Activated naive CD4-positive, alpha-beta T cell treated with anti-CD3 and anti-CD28 coated beads for 36 hours (primary cell): ENCODE measurements at regions of chr21 and their contacts with region 1.

Region 1: GRCh38 chr21:34807146-34807880 is 138.5 kb downstream of the CLIC6 start:
- DNase-seq: peak; percentile 92
- H3K4me3 Mint-ChIP-seq: no peak overlapping the region
- H3K27ac Mint-ChIP-seq: peak overlapping the region; percentile 91
- H3K4me1 Mint-ChIP-seq: peaks cover 91% of the 10 kb centered on the region
- H3K27me3 Mint-ChIP-seq: no peaks in the 10 kb centered on the region

Region 2: GRCh38 chr21:33968080-33968994 is 839.0 kb before region 1 on chr21:
- CTCF ChIA-PET with region 1: no interaction called
- intact Hi-C with region 1: no loop called
- DNase-seq: peak; percentile 31
- H3K4me3 Mint-ChIP-seq: no peak overlapping the region
- H3K27ac Mint-ChIP-seq: no peak overlapping the region
- H3K4me1 Mint-ChIP-seq: peaks cover 3% of the 10 kb centered on the region
- H3K27me3 Mint-ChIP-seq: no peaks in the 10 kb centered on the region

Region 3: DNA sequence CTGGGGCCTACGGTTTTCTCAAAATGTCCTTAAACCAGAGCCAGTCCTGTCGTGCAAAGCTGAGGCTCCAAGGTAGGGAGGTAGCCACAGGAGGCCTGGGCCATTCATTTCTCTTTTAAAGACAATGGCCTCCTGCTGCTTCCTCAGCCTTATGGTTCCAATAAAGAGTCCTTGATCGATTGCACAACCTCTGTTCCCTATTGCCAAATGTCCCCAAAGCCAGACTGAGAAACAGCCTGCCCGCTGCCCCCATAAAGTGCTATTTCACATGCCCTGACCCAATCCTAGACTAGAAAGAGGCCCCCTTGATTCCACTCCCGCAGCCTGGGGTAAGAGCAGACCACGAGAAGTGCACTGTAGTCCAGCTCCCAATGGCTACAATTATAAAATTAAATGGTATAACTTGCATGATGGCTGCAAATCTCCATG is 28.2 kb after region 1 on chr21:
- CTCF ChIA-PET with region 1: no interaction called
- intact Hi-C with region 1: loop called (anchors 2 kb)
- DNase-seq: no peak
- H3K4me3 Mint-ChIP-seq: no peak overlapping the region
- H3K27ac Mint-ChIP-seq: peak overlapping the region; percentile 75
- H3K4me1 Mint-ChIP-seq: peaks cover 45% of the 10 kb centered on the region
- H3K27me3 Mint-ChIP-seq: no peaks in the 10 kb centered on the region

Region 4: GRCh38 chr21:34865928-34866284 is 58.6 kb after region 1 on chr21:
- CTCF ChIA-PET with region 1: no interaction called
- intact Hi-C with region 1: loop called (anchors 1 kb)
- DNase-seq: peak; percentile 76
- H3K4me3 Mint-ChIP-seq: no peak overlapping the region
- H3K27ac Mint-ChIP-seq: peak overlapping the region; percentile 74
- H3K4me1 Mint-ChIP-seq: peaks cover 70% of the 10 kb centered on the region
- H3K27me3 Mint-ChIP-seq: no peaks in the 10 kb centered on the region

Region 5: GRCh38 chr21:34933609-34934335 is 126.5 kb after region 1 on chr21:
- CTCF ChIA-PET with region 1: no interaction called
- intact Hi-C with region 1: loop called (anchors 1 kb)
- DNase-seq: peak; percentile 51
- H3K4me3 Mint-ChIP-seq: peak overlapping the region; percentile 77
- H3K27ac Mint-ChIP-seq: peak overlapping the region; percentile 97
- H3K4me1 Mint-ChIP-seq: peaks cover 80% of the 10 kb centered on the region
- H3K27me3 Mint-ChIP-seq: no peaks in the 10 kb centered on the region

Region 6: DNA sequence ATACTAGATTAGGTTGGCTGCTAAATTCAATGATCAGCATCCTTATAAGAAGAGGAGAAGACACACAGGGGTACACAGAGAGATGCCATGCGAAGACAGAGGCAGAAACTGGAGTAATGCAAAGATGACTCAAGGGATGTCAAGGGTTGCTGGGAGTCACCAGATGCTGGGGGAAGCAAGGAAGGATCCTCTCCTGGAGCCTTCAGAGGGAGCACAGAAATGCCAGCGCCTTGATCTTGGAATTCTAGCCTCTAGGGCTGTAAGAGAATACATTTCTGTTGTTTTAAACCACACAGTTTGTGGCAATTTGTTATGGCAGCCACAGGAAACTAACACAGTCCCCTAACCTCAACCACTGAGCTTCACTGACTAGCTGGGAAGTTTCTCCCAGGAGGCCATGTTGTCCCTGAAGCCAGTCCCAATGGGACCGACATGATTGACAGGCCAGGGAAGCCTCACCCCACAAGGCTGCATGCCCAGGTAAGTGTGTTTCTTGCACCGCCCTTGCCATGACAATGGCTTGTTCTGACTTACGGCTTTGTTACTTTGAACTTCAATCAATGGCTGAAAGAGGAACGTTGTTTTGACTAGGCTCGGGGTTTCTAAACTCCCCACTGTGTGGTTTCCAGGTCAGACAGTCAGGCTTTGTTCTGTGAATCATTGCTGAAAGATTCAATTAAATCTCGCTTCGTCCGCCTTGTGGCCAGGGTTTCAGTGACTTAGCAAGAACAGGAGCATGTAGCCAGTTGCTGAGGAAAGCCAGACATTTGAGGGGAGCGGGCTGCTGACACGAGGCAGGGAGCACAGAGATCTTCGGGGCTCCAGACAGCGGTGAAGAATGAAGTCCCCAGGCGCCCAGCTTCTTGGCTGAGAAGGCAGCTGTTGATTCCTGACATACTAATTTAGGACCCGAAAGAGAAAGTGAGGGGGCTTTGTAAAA is 179.5 kb after region 1 on chr21:
- CTCF ChIA-PET with region 1: no interaction called
- intact Hi-C with region 1: loop called (anchors 5 kb)
- DNase-seq: peak; percentile 92
- H3K4me3 Mint-ChIP-seq: peak overlapping the region; percentile 71
- H3K27ac Mint-ChIP-seq: peak overlapping the region; percentile 89
- H3K4me1 Mint-ChIP-seq: peaks cover 94% of the 10 kb centered on the region
- H3K27me3 Mint-ChIP-seq: no peaks in the 10 kb centered on the region

Region 7: DNA sequence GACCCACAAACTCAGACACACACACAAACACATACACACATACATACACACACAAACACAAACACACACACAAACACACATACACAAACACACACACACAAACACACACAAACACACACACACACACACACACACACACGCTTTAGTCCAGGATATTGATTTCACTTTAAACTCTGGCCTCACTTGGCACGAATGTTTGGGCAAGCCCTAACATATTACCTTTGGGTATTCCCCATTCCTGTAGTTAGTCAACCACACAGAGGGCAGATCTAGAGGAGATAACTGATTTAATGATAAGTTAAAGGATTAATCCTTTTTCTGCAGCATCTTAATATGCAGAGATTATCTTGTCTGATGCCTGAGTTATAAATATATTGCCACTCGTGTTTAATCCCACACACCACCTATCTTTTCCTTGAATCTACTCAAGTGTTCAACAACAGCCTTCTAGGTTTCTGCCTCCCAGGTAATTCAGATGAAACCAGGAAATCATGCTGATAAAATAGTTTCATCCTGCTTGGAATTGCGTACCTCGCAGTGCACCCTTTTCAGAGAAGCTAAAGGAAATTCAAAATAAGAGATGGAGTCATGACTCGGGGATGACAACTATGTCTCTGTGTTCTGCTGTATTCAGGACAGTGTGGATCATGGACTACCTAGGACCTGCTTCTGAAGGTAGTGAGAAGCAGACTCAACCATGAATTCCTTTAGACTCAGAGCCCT is 256.3 kb after region 1 on chr21:
- CTCF ChIA-PET with region 1: no interaction called
- intact Hi-C with region 1: no loop called
- DNase-seq: peak; percentile 24
- H3K4me3 Mint-ChIP-seq: no peak overlapping the region
- H3K27ac Mint-ChIP-seq: no peak overlapping the region
- H3K4me1 Mint-ChIP-seq: peaks cover 24% of the 10 kb centered on the region
- H3K27me3 Mint-ChIP-seq: no peaks in the 10 kb centered on the region

Region 8: DNA sequence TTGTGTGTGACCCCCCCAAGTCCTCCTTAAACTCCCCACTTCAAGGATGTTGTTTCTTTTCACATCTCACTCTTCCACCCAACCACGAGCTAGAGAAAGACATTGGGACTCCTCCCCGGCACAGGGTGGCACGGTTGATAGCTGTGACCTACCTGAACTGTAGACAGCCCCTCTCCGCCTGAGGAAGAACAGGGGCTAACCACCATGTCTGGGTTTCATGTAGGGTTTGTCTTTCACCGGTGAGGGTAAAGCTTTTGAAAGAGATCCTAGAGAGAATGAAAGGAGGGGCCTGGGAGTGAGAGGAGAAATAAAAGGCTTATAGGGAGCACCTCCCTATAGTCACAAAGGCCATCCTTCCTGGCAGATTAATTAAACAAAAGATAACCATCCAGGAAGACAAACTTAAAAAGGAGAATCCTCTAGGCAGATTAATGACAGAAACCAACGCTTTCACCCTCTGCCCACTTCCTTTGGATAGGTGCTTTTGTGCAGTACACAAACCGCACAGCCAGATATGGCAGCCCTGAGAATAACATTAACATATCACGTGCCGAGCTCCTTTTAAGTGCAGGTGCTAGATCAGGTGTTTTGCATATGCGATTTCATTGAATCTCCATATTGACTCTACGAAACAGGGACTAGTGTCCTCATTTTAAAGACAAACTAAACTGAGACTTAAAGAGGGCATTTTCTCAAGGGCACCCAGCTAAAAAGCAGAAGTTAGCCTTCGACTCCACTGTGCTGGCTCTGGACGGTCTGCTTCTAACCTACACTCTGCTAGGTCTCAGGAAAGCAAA is 419.8 kb after region 1 on chr21:
- CTCF ChIA-PET with region 1: no interaction called
- intact Hi-C with region 1: loop called (anchors 10 kb)
- DNase-seq: peak; percentile 87
- H3K4me3 Mint-ChIP-seq: peak overlapping the region; percentile 66
- H3K27ac Mint-ChIP-seq: peak overlapping the region; percentile 87
- H3K4me1 Mint-ChIP-seq: peaks cover 39% of the 10 kb centered on the region
- H3K27me3 Mint-ChIP-seq: no peaks in the 10 kb centered on the region

Region 9: GRCh38 chr21:35528116-35529042 is 721.1 kb after region 1 on chr21:
- CTCF ChIA-PET with region 1: no interaction called
- intact Hi-C with region 1: loop called (anchors 2 kb)
- DNase-seq: peak; percentile 80
- H3K4me3 Mint-ChIP-seq: peak overlapping the region; percentile 82
- H3K27ac Mint-ChIP-seq: peak overlapping the region; percentile 87
- H3K4me1 Mint-ChIP-seq: peaks cover 46% of the 10 kb centered on the region
- H3K27me3 Mint-ChIP-seq: no peaks in the 10 kb centered on the region